ENCODE measurements at regions of chr19 and their contacts with region 1.

Region 1: GRCh38 chr19:8412783-8413628 is at the start of gene MARCHF2:
- DNase-seq: peak; percentile 96 to 98 (median 97)
- H3K4me3 ChIP-seq: peak within 1 kb of the TSS; percentile 53 to 89 (median 79)
- H3K27ac ChIP-seq: peak within 1 kb of the TSS in 1 of 2 experiments; percentile 70
- H3K4me1 ChIP-seq: peaks cover 5 to 43% (median 39%) of the 10 kb centered on the region in 4 experiments
- H3K27me3 ChIP-seq: no peaks in the 10 kb centered on the region

Region 2: GRCh38 chr19:8444645-8445487 is 31.9 kb after region 1 on chr19 and contains the start of gene HNRNPM:
- CTCF ChIA-PET with region 1: interaction called, 10 read pairs
- POLR2A ChIA-PET with region 1: interaction called, 13 read pairs
- DNase-seq: peak; percentile 97 to 99 (median 98)
- H3K4me3 ChIP-seq: peak within 1 kb of the TSS; percentile 83 to 97 (median 93)
- H3K27ac ChIP-seq: peak within 1 kb of the TSS; percentile 97 to 98
- H3K4me1 ChIP-seq: peaks cover 22 to 44% (median 34%) of the 10 kb centered on the region in 4 experiments
- H3K27me3 ChIP-seq: no peaks in the 10 kb centered on the region

Measured in common myeloid progenitor, CD34-positive (primary cell).